MCF 10A (cell line): ENCODE measurements at regions of chr15 and their contacts with region 1.

Region 1: GRCh38 chr15:51982013-51982769 is 10.6 kb upstream of the LEO1 start:
- DNase-seq: peak; percentile 78
- H3K4me3 Mint-ChIP-seq: peak overlapping the region; percentile 31
- H3K27ac Mint-ChIP-seq: peak overlapping the region; percentile 77
- H3K4me1 Mint-ChIP-seq: peaks cover 12% of the 10 kb centered on the region
- H3K27me3 Mint-ChIP-seq: no peaks in the 10 kb centered on the region
- CTCF ChIP-seq: peak; percentile 82

Region 2: GRCh38 chr15:51955504-51956101 is 26.6 kb before region 1 on chr15:
- CTCF ChIA-PET with region 1: no interaction called
- POLR2A ChIA-PET with region 1: no interaction called
- intact Hi-C with region 1: no loop called
- DNase-seq: no peak
- H3K4me3 Mint-ChIP-seq: no peak overlapping the region
- H3K27ac Mint-ChIP-seq: no peak overlapping the region
- H3K4me1 Mint-ChIP-seq: no peaks in the 10 kb centered on the region
- H3K27me3 Mint-ChIP-seq: no peaks in the 10 kb centered on the region
- CTCF ChIP-seq: no peak

Region 3: DNA sequence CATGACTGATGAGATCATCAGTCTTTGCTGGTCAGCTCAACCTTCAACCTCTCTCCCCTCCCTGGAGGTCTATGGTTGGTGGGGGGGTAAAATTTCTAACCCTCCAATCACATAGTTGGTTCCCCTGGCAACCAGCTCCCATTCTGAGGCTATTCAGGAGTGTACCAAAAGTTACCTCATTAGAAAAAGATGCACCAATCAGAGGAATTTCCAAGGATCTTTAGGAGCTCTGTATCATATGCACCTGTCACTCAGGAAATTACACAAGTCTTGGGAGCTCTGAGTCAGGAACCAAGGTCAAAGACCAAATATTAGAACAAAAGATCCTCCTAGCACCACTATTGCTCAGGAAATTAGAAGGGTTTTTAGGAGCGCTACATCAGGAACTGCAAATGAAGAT is 10.8 kb after region 1 on chr15:
- CTCF ChIA-PET with region 1: interaction called, 5 read pairs
- POLR2A ChIA-PET with region 1: interaction called, 10 read pairs
- intact Hi-C with region 1: no loop called
- DNase-seq: peak; percentile 71
- H3K4me3 Mint-ChIP-seq: no peak overlapping the region
- H3K27ac Mint-ChIP-seq: no peak overlapping the region
- H3K4me1 Mint-ChIP-seq: peaks cover 28% of the 10 kb centered on the region
- H3K27me3 Mint-ChIP-seq: no peaks in the 10 kb centered on the region
- CTCF ChIP-seq: no peak

Region 4: GRCh38 chr15:52139599-52140491 is 157.7 kb after region 1 on chr15:
- CTCF ChIA-PET with region 1: interaction called, 12 read pairs
- POLR2A ChIA-PET with region 1: no interaction called
- intact Hi-C with region 1: loop called (anchors 1 kb)
- DNase-seq: peak; percentile 80
- H3K4me3 Mint-ChIP-seq: no peak overlapping the region
- H3K27ac Mint-ChIP-seq: peak overlapping the region; percentile 91
- H3K4me1 Mint-ChIP-seq: peaks cover 23% of the 10 kb centered on the region
- H3K27me3 Mint-ChIP-seq: no peaks in the 10 kb centered on the region
- CTCF ChIP-seq: peak; percentile 83

Region 5: GRCh38 chr15:52208306-52208946 is 226.2 kb after region 1 on chr15:
- CTCF ChIA-PET with region 1: interaction called, 4 read pairs
- POLR2A ChIA-PET with region 1: no interaction called
- intact Hi-C with region 1: loop called (anchors 1 kb)
- DNase-seq: peak; percentile 73
- H3K4me3 Mint-ChIP-seq: no peak overlapping the region
- H3K27ac Mint-ChIP-seq: no peak overlapping the region
- H3K4me1 Mint-ChIP-seq: no peaks in the 10 kb centered on the region
- H3K27me3 Mint-ChIP-seq: no peaks in the 10 kb centered on the region
- CTCF ChIP-seq: peak; percentile 83

Region 6: DNA sequence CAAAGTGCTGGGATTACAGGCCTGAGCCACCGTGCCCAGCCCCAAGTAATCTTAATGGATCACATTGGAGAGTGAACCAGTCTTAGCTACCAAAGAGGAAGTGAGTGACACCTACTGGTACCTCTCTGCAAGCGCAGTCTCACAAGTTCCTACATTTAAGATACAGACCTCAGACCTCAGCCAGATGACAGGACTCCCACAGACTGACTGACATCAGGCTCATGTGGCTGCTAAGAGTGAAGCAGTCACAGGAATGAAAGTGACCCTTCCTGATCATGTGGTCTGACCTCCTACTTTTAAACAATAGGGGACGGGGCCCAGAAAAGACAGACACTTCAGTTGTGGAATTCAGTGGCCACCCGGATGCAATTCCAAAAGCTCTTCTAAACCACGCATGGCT is 245.3 kb after region 1 on chr15:
- CTCF ChIA-PET with region 1: interaction called, 13 read pairs
- POLR2A ChIA-PET with region 1: interaction called, 3 read pairs
- intact Hi-C with region 1: loop called (anchors 1 kb)
- DNase-seq: peak; percentile 73
- H3K4me3 Mint-ChIP-seq: no peak overlapping the region
- H3K27ac Mint-ChIP-seq: no peak overlapping the region
- H3K4me1 Mint-ChIP-seq: no peaks in the 10 kb centered on the region
- H3K27me3 Mint-ChIP-seq: no peaks in the 10 kb centered on the region
- CTCF ChIP-seq: peak; percentile 77

Region 7: GRCh38 chr15:52735231-52736089 is 753.3 kb after region 1 on chr15:
- CTCF ChIA-PET with region 1: no interaction called
- POLR2A ChIA-PET with region 1: no interaction called
- intact Hi-C with region 1: loop called (anchors 5 kb)
- DNase-seq: peak; percentile 81
- H3K4me3 Mint-ChIP-seq: no peak overlapping the region
- H3K27ac Mint-ChIP-seq: no peak overlapping the region
- H3K4me1 Mint-ChIP-seq: peaks cover 1% of the 10 kb centered on the region
- H3K27me3 Mint-ChIP-seq: no peaks in the 10 kb centered on the region
- CTCF ChIP-seq: peak; percentile 81